ENCODE measurements at regions of chr12 and their contacts with region 1.

Region 1: GRCh38 chr12:9039397-9039977 is 50.1 kb downstream of the KLRG1 start:
- DNase-seq: no peak
- ATAC-seq: peak; percentile 87
- H3K4me3 Mint-ChIP-seq: no peak overlapping the region
- H3K27ac Mint-ChIP-seq: peak overlapping the region; percentile 53
- H3K4me1 Mint-ChIP-seq: peaks cover 52% of the 10 kb centered on the region
- H3K27me3 Mint-ChIP-seq: no peaks in the 10 kb centered on the region
- CTCF ChIP-seq: peak; percentile 89

Region 2: GRCh38 chr12:8960176-8960575 is 79.3 kb before region 1 on chr12:
- CTCF ChIA-PET with region 1: interaction called, 13 read pairs
- POLR2A ChIA-PET with region 1: interaction called, 3 read pairs
- intact Hi-C with region 1: no loop called
- DNase-seq: no peak
- ATAC-seq: peak; percentile 80
- H3K4me3 Mint-ChIP-seq: no peak overlapping the region
- H3K27ac Mint-ChIP-seq: peak overlapping the region; percentile 2
- H3K4me1 Mint-ChIP-seq: peaks cover 52% of the 10 kb centered on the region
- H3K27me3 Mint-ChIP-seq: no peaks in the 10 kb centered on the region
- CTCF ChIP-seq: no peak

Region 3: DNA sequence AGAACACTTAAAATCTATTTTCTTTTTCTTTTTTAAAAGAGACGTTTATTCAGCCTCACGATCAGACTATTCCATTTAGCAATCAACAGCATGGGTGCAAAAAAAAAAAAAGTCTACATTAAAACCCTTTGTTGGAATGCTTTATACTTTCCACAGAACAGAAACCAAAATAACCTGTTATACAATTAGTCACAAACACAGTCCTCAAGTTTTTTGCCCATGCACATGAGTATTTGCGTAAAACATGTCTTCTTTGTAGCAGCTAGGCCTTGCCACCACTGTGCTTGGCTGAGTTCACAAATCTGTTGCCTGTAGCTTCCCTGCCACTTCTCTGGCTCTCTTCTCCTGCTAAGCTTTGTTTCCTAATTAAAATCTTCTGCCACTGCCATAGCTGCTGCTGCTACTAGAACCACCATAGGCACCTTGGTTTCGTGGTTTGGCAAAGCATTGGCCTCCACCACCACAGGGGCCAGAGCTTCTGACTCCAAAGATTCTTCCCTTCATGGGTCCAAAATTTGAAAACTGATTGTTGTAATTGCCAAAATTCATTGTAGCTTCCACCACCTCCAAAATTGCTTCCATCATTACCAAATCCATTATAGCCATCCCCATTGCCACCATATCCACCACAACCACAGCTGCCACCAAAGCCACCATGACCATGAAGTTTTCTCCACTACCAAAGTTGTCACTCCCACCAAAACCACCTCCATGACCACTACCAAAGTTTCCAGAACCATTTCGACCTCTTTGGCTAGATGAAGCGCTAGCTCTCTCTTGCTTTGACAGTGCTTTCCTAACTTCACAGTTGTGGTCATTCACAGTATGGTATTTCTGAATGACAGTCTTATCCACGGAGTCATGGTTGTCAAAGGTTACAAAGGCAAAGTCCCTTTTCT is 12.1 kb before region 1 on chr12:
- CTCF ChIA-PET with region 1: interaction called, 9 read pairs
- POLR2A ChIA-PET with region 1: interaction called, 5 read pairs
- intact Hi-C with region 1: loop called (anchors 2 kb)
- DNase-seq: peak; percentile 76
- ATAC-seq: no peak
- H3K4me3 Mint-ChIP-seq: peak overlapping the region; percentile 60
- H3K27ac Mint-ChIP-seq: peak overlapping the region; percentile 94
- H3K4me1 Mint-ChIP-seq: peaks cover 40% of the 10 kb centered on the region
- H3K27me3 Mint-ChIP-seq: peaks cover 2% of the 10 kb centered on the region
- CTCF ChIP-seq: no peak